IMR-90 (cell line): ENCODE measurements at regions of chr11 and their contacts with region 1.

Region 1: DNA sequence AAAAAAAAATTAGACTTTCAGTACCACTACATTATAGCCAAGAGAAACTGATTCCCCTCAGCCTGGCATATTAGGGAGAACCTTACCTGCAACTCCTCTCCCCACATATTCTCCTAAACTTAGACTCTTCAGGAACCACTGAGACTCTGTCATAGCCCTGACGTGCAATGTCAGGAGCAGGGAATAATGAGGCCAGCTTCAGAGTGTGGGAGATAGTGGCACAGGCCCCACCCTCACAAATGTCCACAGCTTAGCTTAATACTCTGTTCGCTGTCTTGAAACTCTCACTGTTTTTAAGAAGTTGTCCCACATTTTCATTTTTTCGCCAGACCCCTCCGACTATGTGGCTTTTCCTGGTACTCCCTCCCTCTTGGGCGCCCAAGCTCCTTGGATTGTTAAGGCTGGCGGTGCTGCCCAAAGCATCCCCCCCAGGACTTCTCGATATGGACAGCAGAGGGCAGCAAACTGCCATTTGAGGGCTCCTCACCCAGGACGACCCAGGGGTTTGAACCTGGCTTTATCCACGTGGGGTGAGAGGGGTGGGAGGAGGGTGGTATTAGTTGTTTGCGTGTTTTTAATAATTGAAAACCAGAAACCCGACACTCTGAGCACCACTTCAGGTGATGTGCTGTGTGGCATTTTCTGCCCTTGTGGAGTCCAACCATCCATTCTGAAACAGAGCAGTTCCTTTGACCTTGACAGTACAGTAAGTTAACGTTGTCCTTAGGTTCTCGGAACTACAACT is 45.2 kb upstream of the RASSF10 start:
- DNase-seq: peak; percentile 48
- ATAC-seq: peak; percentile 99
- H3K4me3 ChIP-seq: no peak overlapping the region
- H3K27ac ChIP-seq: no peak overlapping the region
- H3K4me1 ChIP-seq: no peaks in the 10 kb centered on the region
- H3K27me3 ChIP-seq: peaks cover 32% of the 10 kb centered on the region
- CTCF ChIP-seq: peak; percentile 95
- POLR2A ChIP-seq: no peak
- RAD21 ChIP-seq: peak; percentile 96

Region 2: GRCh38 chr11:12888525-12889158 is 75.3 kb before region 1 on chr11:
- CTCF ChIA-PET with region 1: no interaction called
- POLR2A ChIA-PET with region 1: no interaction called
- dilution Hi-C with region 1: no loop called
- in situ Hi-C with region 1: no loop called
- intact Hi-C with region 1: no loop called
- DNase-seq: peak; percentile 90
- ATAC-seq: peak; percentile 75
- H3K4me3 ChIP-seq: no peak overlapping the region
- H3K27ac ChIP-seq: peak overlapping the region; percentile 60; the same call in 1 of the 2 replicates
- H3K4me1 ChIP-seq: peaks cover 22% of the 10 kb centered on the region
- H3K27me3 ChIP-seq: no peaks in the 10 kb centered on the region
- CTCF ChIP-seq: peak; percentile 83
- POLR2A ChIP-seq: 0 out of 2 replicates have a peak, but pooled peaks have one; percentile 22
- RAD21 ChIP-seq: peak; percentile 81

Region 3: GRCh38 chr11:13145461-13145860 is 181.5 kb after region 1 on chr11:
- CTCF ChIA-PET with region 1: interaction called, 10 read pairs
- POLR2A ChIA-PET with region 1: no interaction called
- dilution Hi-C with region 1: loop called (anchors 25 kb)
- in situ Hi-C with region 1: loop called (anchors 5 kb)
- intact Hi-C with region 1: no loop called
- DNase-seq: no peak
- ATAC-seq: no peak
- H3K4me3 ChIP-seq: no peak overlapping the region
- H3K27ac ChIP-seq: no peak overlapping the region
- H3K4me1 ChIP-seq: 0 out of 2 replicates have a peak, but pooled peaks cover under 1% of the 10 kb centered on the region
- H3K27me3 ChIP-seq: peaks cover 34% of the 10 kb centered on the region
- CTCF ChIP-seq: no peak
- POLR2A ChIP-seq: no peak
- RAD21 ChIP-seq: no peak

Region 4: DNA sequence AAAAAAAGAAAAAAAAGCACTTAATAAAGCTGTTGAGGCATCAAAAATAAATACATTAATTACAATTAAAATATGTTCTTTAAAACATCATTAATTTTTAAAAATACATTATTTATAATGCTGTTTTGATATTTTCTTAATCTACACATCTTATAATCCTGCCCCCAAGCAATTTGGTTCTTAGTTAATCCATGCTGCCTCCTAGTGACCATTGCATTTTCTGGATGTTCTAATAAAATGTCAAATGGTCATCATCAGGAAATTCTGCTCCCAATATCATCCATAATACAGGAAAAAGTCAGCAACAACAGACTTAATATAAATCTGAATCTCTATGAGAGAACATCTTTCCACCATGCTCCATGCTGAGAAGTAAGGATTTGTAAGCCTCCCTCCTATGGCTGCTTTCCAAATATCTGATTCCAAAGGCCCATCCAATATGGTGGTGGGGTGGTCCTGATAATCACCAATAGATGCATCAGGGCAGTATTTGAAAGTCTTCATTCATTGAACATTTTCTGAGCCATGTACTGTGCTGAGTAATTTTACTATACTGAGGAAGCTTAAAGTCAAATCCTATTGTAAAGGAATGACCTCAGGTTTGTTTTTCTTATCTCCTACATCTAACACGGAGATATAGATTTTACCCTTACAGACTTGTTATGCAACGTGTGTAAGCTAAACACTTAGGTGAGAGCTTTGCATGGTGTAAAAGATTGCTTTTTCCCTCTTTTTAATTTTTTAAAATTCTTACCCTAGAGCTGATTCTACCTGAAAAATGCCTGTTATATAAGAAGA is 189.0 kb after region 1 on chr11:
- CTCF ChIA-PET with region 1: interaction called, 10 read pairs
- POLR2A ChIA-PET with region 1: no interaction called
- dilution Hi-C with region 1: loop called (anchors 25 kb)
- in situ Hi-C with region 1: loop called (anchors 5 kb)
- intact Hi-C with region 1: loop called (anchors 1 kb)
- DNase-seq: peak; percentile 42
- ATAC-seq: no peak
- H3K4me3 ChIP-seq: no peak overlapping the region
- H3K27ac ChIP-seq: no peak overlapping the region
- H3K4me1 ChIP-seq: no peaks in the 10 kb centered on the region
- H3K27me3 ChIP-seq: peaks cover 31% of the 10 kb centered on the region
- CTCF ChIP-seq: peak; percentile 81
- POLR2A ChIP-seq: no peak
- RAD21 ChIP-seq: peak; percentile 86

Region 5: DNA sequence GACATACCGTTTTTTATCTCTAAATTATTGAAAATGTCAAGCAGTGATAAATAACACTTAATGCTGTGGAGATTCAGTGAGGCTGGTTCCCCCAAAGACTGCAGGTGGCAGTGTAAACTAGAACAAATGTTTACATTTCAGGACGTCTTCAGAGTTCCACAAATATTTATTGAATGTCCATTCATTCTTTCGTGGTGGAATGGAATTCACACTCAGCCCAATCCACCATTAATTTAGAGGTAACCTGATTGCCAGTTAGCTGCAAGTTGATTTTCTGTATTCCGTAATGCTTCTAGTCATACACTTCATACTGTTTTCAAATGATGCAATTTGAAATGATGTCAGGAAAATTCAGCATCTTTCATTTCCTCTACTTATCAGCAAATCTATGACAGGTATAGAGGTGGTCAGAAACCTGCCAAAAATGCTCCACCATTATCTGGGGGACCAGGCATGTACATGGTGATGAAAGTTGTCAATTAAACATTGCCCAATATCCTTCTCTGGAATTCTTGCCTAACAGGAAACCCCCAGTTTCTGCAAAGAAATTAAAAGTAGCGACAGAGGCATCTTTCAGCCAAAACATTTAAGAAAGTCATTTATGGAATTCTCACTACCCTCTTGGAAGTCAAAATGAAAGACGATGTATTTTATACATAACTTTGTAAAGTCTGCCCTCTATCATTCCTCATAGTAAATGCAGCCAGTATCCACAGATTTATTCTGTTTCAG is 219.3 kb after region 1 on chr11:
- CTCF ChIA-PET with region 1: interaction called, 17 read pairs
- POLR2A ChIA-PET with region 1: no interaction called
- dilution Hi-C with region 1: no loop called
- in situ Hi-C with region 1: no loop called
- intact Hi-C with region 1: loop called (anchors 1 kb)
- DNase-seq: peak; percentile 54
- ATAC-seq: peak; percentile 95
- H3K4me3 ChIP-seq: no peak overlapping the region; the same call in 1 of the 2 replicates
- H3K27ac ChIP-seq: no peak overlapping the region
- H3K4me1 ChIP-seq: no peaks in the 10 kb centered on the region
- H3K27me3 ChIP-seq: peaks cover 3% of the 10 kb centered on the region; the same call in 1 of the 2 replicates
- CTCF ChIP-seq: peak; percentile 66
- POLR2A ChIP-seq: no peak
- RAD21 ChIP-seq: peak; percentile 58

Region 6: DNA sequence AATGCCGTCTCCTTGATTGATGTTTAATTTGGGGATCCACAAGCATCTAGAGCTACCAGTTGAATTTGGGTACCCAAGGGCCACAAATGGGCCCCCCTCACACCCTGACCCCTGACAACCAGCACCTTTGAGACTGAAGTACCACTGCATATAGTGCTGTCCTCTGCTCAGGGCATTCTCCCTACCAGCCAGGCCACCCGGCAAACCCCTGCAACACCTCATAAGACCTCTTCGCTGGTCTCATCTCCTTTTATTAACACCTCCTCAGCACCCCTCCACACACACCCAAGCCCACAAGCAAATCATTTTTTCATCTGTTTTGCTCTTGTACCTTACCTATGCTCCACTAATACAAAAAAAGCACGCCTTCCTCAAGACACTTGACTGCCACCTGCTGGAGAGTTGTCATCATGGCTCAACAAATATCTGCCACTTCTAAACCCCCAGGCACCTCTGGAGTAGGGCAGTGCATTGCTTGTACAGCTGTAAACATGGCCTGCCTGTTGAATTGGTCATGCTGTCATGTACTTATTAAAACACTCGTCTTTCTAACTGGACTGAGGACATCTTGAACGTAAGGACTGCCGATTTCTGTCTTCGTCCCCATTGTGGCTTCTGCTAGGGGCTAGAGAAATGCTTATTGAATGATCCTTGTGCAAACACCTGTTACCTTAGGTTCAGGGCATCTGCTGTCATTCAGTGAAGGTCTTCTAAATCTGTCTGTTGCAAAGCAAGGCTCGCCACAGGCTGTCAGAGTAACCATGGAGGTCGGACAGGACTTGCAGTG is 380.2 kb after region 1 on chr11:
- CTCF ChIA-PET with region 1: interaction called, 3 read pairs
- POLR2A ChIA-PET with region 1: no interaction called
- dilution Hi-C with region 1: no loop called
- in situ Hi-C with region 1: loop called (anchors 5 kb)
- intact Hi-C with region 1: loop called (anchors 2 kb)
- DNase-seq: peak; percentile 79
- ATAC-seq: peak; percentile 74
- H3K4me3 ChIP-seq: no peak overlapping the region
- H3K27ac ChIP-seq: no peak overlapping the region
- H3K4me1 ChIP-seq: peaks cover 11% of the 10 kb centered on the region
- H3K27me3 ChIP-seq: no peaks in the 10 kb centered on the region
- CTCF ChIP-seq: peak; percentile 87
- POLR2A ChIP-seq: no peak
- RAD21 ChIP-seq: peak; percentile 90